ENCODE measurements at regions of chr5 and their contacts with region 1.

Region 1: GRCh38 chr5:154179846-154180710 is 10.5 kb upstream of the GALNT10 start:
- DNase-seq: peak; percentile 69 to 80
- ATAC-seq: peak; percentile 96 to 98
- H3K4me3 ChIP-seq: no peak overlapping the region
- H3K27ac ChIP-seq: no peak overlapping the region
- H3K4me1 ChIP-seq: no peaks in the 10 kb centered on the region
- CTCF ChIP-seq: peak; percentile 76
- EP300 ChIP-seq: no peak
- POLR2A ChIP-seq: no peak
- RAD21 ChIP-seq: peak; percentile 77 to 82

Region 2: GRCh38 chr5:154164249-154164581 is 15.9 kb before region 1 on chr5:
- CTCF ChIA-PET with region 1: interaction called, 10 read pairs
- POLR2A ChIA-PET with region 1: no interaction called
- DNase-seq: no peak
- ATAC-seq: no peak
- H3K4me3 ChIP-seq: no peak overlapping the region
- H3K27ac ChIP-seq: no peak overlapping the region
- H3K4me1 ChIP-seq: no peaks in the 10 kb centered on the region; the same call in 2 of the 3 replicates
- CTCF ChIP-seq: no peak
- EP300 ChIP-seq: no peak
- POLR2A ChIP-seq: no peak
- RAD21 ChIP-seq: no peak

Region 3: DNA sequence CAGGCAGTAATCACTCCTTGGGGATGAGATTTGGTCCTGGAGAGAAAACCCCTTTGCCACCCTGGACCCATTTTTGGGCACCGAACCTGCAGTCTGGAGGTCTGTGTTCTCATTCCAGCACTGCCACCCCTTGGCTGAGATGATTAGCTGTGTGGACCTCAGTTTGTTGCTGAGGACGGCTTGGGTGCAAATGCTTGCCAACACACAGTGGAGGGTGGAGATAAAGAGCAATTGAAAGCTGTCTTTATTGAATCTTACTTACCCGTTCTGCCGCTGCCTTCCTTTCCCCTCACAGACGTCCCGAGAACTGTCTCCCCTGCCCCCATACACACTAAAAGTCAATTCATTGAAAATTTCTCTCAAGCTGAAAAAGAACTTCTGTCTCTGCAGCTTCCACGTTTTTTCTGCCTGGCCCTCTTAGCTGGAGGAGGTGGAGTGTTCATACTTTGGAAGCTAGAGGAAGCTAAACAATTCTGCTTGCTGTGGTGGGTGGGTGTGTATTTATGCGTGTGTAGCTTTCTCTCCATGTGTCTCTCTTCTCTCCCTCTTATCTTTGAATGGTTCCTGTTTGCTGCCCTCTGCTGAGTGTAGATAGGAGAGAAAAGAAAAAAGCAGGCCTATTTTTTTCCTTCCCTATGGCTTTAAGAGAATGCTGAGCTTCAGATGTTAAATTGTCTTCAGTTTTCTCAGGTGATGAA is 17.0 kb after region 1 on chr5:
- CTCF ChIA-PET with region 1: interaction called, 46 read pairs
- POLR2A ChIA-PET with region 1: no interaction called
- DNase-seq: peak; percentile 35 to 51
- ATAC-seq: peak; percentile 37 to 38; a peak in 3 of 6 replicates
- H3K4me3 ChIP-seq: no peak overlapping the region
- H3K27ac ChIP-seq: peak overlapping the region; percentile 90 to 93
- H3K4me1 ChIP-seq: peaks cover 89% of the 10 kb centered on the region
- CTCF ChIP-seq: peak; percentile 48
- EP300 ChIP-seq: no peak
- POLR2A ChIP-seq: no peak
- RAD21 ChIP-seq: peak; percentile 16 to 42; a peak in 3 of 5 replicates